Naive thymus-derived CD4-positive, alpha-beta T cell (primary cell): ENCODE measurements at regions of chr16 and their contacts with region 1.

Region 1: GRCh38 chr16:28211712-28212534 is at the start of gene XPO6:
- DNase-seq: peak; percentile 95 to 100 (median 98)
- ATAC-seq: peak; percentile 97
- H3K4me3 ChIP-seq: peak within 1 kb of the TSS; percentile 72
- H3K4me3 Mint-ChIP-seq: peak within 1 kb of the TSS; percentile 65 to 98 (median 93)
- H3K27ac ChIP-seq: peak within 1 kb of the TSS; percentile 85
- H3K27ac Mint-ChIP-seq: peak within 1 kb of the TSS; percentile 80 to 98 (median 94)
- H3K4me1 ChIP-seq: peaks cover 19 to 21% of the 10 kb centered on the region in 2 donors
- H3K4me1 Mint-ChIP-seq: peaks cover 8 to 39% (median 32%) of the 10 kb centered on the region in 7 donors
- H3K27me3 ChIP-seq: no peaks in the 10 kb centered on the region
- H3K27me3 Mint-ChIP-seq: no peaks in the 10 kb centered on the region
- total RNA-seq, gene XPO6: 232 to 437 (median 385) TPM

Region 2: GRCh38 chr16:27203429-27204231 is 1008.3 kb before region 1 on chr16 and contains the start of gene KDM8:
- CTCF ChIA-PET with region 1: no interaction called
- POLR2A ChIA-PET with region 1: no interaction called
- intact Hi-C with region 1: loop called in 1 of 2 experiments (anchors 10 kb)
- DNase-seq: peak; percentile 96 to 100 (median 100)
- ATAC-seq: peak; percentile 88
- H3K4me3 ChIP-seq: peak within 1 kb of the TSS; percentile 97
- H3K4me3 Mint-ChIP-seq: peak within 1 kb of the TSS; percentile 91 to 100 (median 98)
- H3K27ac ChIP-seq: peak within 1 kb of the TSS; percentile 93
- H3K27ac Mint-ChIP-seq: peak within 1 kb of the TSS; percentile 94 to 100 (median 100)
- H3K4me1 ChIP-seq: peaks cover 40 to 50% of the 10 kb centered on the region in 2 donors
- H3K4me1 Mint-ChIP-seq: peaks cover 41 to 70% (median 60%) of the 10 kb centered on the region in 7 donors
- H3K27me3 ChIP-seq: no peaks in the 10 kb centered on the region
- H3K27me3 Mint-ChIP-seq: peaks cover 0 to 3% (median 0%) of the 10 kb centered on the region in 5 donors
- total RNA-seq, gene KDM8: 15.6 to 34.4 (median 19.0) TPM

Region 3: GRCh38 chr16:28140788-28141618 is 70.9 kb before region 1 on chr16:
- CTCF ChIA-PET with region 1: interaction called, 168 read pairs
- POLR2A ChIA-PET with region 1: interaction called, 92 read pairs
- intact Hi-C with region 1: loop called (anchors 1 kb)
- DNase-seq: peak; percentile 15 to 96 (median 90)
- ATAC-seq: peak; percentile 84
- H3K4me3 ChIP-seq: peak overlapping the region; percentile 58
- H3K4me3 Mint-ChIP-seq: peak overlapping the region; percentile 75 to 93 (median 86)
- H3K27ac ChIP-seq: peak overlapping the region; percentile 77
- H3K27ac Mint-ChIP-seq: peak overlapping the region; percentile 95 to 99 (median 99)
- H3K4me1 ChIP-seq: peaks cover 87 to 91% of the 10 kb centered on the region in 2 donors
- H3K4me1 Mint-ChIP-seq: peaks cover 67 to 94% (median 87%) of the 10 kb centered on the region in 7 donors
- H3K27me3 ChIP-seq: no peaks in the 10 kb centered on the region
- H3K27me3 Mint-ChIP-seq: no peaks in the 10 kb centered on the region

Region 4: DNA sequence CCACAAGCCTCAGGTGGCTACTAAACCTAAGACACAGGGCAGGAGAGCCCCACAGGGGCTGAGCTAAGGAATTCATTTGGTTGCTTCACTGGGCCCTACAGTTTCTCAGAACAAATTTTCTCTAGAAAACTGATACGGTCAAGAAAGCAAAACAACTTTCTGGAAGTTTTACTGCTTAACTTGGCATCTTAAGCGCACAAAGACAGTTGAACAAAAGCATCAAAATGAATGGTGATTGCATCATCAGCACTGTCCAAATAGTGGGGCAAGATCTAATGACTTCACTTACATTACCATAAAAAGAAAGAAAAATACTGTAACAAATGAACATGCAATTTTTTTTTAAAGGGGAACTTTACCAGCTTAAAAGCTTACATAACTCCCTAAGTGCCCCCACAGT is 47.8 kb before region 1 on chr16:
- CTCF ChIA-PET with region 1: interaction called, 7 read pairs
- POLR2A ChIA-PET with region 1: interaction called, 9 read pairs
- intact Hi-C with region 1: loop called in 1 of 2 experiments (anchors 1 kb)
- DNase-seq: no peak
- ATAC-seq: no peak
- H3K4me3 ChIP-seq: no peak overlapping the region
- H3K4me3 Mint-ChIP-seq: peak overlapping the region in 4 of 10 donors; percentile 9 to 69 (median 42)
- H3K27ac ChIP-seq: no peak overlapping the region
- H3K27ac Mint-ChIP-seq: peak overlapping the region in 8 of 9 donors; percentile 43 to 95 (median 82)
- H3K4me1 ChIP-seq: peaks cover 13 to 66% of the 10 kb centered on the region in 2 donors
- H3K4me1 Mint-ChIP-seq: peaks cover 62 to 96% (median 86%) of the 10 kb centered on the region in 7 donors
- H3K27me3 ChIP-seq: no peaks in the 10 kb centered on the region
- H3K27me3 Mint-ChIP-seq: no peaks in the 10 kb centered on the region

Region 5: DNA sequence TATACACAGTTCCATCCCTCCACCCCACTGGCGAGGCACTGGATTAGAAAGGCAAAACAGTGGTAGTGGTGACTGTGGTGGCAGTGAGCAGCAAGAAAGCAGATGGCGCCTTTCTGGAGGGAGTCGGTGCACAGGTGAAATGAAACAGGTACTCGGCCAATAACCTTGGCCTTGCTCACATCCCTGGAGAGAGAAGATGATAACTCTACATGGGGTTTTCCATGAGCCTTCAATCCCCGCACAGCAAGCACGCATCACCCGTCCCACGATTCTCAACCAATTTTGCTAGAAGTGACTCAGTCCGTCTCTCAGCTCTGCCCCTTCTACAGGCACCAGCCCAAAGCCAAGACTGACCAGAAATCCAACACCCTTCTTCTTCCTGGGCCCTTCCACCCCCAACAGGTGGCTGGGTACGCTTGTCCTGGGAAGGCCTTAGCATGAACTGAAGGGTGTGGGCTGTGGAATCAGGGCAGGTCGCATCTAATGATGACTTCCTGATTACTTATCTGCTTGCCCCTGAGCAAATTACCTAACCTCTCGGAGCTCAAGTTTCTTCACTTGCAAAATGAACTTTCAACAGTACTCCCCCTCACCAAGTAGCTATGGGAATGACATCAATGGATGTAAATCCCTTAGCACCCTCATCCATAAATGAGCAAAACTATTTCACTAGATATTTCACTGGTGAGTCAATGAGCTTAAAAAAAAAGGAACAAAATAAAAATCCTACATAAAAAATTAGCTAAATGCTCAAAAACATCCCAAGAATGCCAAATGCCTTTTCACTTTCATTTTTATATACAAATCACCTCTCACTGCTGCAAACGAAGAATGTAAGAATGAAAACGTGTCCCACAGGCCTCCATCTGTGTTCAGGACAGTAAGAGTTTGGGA is 18.1 kb before region 1 on chr16:
- CTCF ChIA-PET with region 1: interaction called, 18 read pairs
- POLR2A ChIA-PET with region 1: interaction called, 53 read pairs
- intact Hi-C with region 1: loop called (anchors 1 kb)
- DNase-seq: peak in 2 of 9 donors; percentile 45 to 55
- ATAC-seq: peak; percentile 24
- H3K4me3 ChIP-seq: peak overlapping the region; percentile 39
- H3K4me3 Mint-ChIP-seq: peak overlapping the region; percentile 73 to 87 (median 86)
- H3K27ac ChIP-seq: peak overlapping the region; percentile 77
- H3K27ac Mint-ChIP-seq: peak overlapping the region; percentile 86 to 99 (median 95)
- H3K4me1 ChIP-seq: peaks cover 43 to 75% of the 10 kb centered on the region in 2 donors
- H3K4me1 Mint-ChIP-seq: peaks cover 65 to 94% (median 84%) of the 10 kb centered on the region in 7 donors
- H3K27me3 ChIP-seq: no peaks in the 10 kb centered on the region
- H3K27me3 Mint-ChIP-seq: no peaks in the 10 kb centered on the region

Region 6: DNA sequence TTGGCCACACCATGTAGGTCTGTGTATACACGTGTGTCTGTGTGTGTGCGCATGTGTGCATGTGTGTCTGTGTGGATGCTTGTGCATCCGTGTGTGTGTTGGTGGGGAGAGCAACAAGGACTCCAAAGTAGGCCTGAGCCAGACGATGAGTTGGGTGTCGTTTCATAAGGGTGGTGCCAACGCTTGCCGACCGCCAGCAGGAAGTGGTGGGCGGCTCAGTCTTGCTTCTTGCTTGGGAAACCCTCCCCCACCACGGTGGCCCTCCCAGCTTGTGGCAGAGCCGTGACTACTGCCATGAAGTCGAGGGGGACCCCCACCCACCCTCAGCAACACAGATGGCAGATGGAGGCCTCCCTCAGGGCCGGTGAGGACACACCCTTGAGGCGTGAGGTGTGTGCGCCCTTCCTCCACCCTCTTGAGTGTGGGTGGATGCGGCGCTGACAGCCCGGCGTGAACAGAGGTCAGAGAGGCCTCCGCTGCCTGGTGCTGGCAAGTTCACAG is 97.9 kb after region 1 on chr16:
- CTCF ChIA-PET with region 1: no interaction called
- POLR2A ChIA-PET with region 1: interaction called, 3 read pairs
- intact Hi-C with region 1: loop called in 1 of 2 experiments (anchors 5 kb)
- DNase-seq: peak; percentile 62 to 91 (median 88)
- ATAC-seq: peak; percentile 94
- H3K4me3 ChIP-seq: peak overlapping the region; percentile 59
- H3K4me3 Mint-ChIP-seq: peak overlapping the region; percentile 66 to 87 (median 76)
- H3K27ac ChIP-seq: peak overlapping the region; percentile 77
- H3K27ac Mint-ChIP-seq: peak overlapping the region; percentile 81 to 99 (median 97)
- H3K4me1 ChIP-seq: peaks cover 44 to 49% of the 10 kb centered on the region in 2 donors
- H3K4me1 Mint-ChIP-seq: peaks cover 29 to 91% (median 73%) of the 10 kb centered on the region in 7 donors
- H3K27me3 ChIP-seq: no peaks in the 10 kb centered on the region
- H3K27me3 Mint-ChIP-seq: no peaks in the 10 kb centered on the region

Region 7: DNA sequence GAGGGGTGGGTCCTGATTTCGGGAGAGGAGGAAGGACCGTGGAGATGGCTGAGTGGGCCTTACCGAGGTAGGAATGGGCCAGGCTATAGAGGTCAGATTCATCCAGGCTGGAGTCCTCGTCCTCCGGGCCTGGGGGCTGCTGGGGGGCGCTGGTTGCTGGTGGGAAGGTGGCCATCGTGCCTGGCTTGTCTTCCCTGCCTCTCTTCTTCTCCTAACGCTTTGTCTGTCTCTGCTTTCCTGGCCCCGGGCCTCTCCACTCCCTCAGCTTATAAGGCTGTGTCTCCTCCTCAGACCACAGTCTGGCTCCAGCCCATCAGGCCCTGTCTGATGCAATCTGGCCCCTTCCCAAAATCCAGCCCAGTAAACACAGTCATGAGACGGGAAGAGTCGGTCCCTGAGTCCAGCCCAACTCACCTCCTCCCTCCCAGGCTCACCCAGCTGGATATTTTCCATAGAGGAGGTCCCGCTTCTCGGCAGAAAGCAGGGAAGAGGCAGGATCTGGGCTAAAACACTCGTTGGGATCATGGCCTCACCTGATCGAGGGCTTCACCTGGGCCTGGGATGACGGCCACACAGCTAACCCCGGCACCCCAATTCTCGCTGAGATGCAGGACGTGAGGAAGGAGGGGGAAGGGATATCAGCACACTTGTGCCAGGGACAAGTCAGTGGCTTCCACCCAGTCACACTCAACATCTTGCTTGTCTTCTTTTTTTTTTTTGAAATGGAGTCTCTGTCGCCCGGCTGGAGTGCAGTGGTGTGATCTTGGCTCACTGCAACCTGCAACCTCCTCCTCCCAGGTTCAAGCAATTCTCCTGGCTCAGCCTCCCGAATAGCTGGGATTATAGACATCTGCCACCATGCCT is 327.0 kb after region 1 on chr16 and contains the start of gene NUPR1:
- CTCF ChIA-PET with region 1: no interaction called
- POLR2A ChIA-PET with region 1: no interaction called
- intact Hi-C with region 1: no loop called
- DNase-seq: no peak
- ATAC-seq: no peak
- H3K4me3 ChIP-seq: no peak within 1 kb of the TSS
- H3K4me3 Mint-ChIP-seq: peak within 1 kb of the TSS in 1 of 10 donors; percentile 2
- H3K27ac ChIP-seq: no peak within 1 kb of the TSS
- H3K27ac Mint-ChIP-seq: peak within 1 kb of the TSS; percentile 5 to 87 (median 76)
- H3K4me1 ChIP-seq: peaks cover 17 to 18% of the 10 kb centered on the region in 2 donors
- H3K4me1 Mint-ChIP-seq: peaks cover 18 to 65% (median 40%) of the 10 kb centered on the region in 7 donors
- H3K27me3 ChIP-seq: no peaks in the 10 kb centered on the region
- H3K27me3 Mint-ChIP-seq: no peaks in the 10 kb centered on the region
- total RNA-seq, gene NUPR1: 0.05 to 0.11 TPM in 2 of 5 experiments, not detected in the others

Region 8: DNA sequence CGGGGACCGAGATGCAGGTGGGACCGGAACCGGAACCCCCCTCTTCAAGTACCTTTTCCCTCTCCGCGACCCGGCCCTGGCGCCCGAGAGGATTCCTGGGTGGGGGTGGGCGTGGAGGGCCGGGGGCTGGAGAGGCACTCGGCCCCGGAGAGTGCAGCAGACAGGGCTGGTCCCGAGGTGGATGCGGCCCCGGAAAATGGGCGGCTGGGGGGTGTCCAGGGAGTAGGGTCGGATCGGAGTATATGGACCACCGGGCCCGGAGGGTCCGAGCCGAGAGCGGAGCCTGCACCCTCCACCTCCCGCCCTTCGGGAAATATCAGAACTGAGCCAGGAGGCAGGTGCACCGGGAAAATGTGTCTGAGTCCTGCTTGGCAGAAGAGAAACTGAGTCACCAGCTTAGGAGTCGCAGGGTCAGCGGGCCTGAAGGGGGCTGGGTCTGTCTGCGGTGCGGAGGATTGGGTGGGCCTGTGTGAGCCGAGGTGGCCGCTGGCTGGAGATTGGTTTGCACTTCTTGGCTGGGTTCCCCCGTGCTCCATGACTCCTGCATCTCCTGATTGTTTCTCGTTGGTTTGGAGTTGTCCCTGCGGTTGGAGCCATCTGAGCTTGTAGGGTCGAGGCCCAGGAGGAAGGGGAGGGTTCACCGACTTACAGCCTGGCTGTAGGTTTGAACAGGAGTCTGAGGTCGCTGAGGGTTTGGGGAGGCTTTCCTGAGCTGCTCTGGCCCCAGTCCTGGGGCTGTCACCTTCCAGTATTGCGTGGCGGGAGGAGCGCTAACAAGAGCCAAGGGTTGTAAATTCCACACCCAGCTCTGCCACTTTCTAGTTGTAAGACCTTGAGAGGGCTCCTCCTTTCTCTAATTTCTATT is 652.2 kb after region 1 on chr16:
- CTCF ChIA-PET with region 1: no interaction called
- POLR2A ChIA-PET with region 1: no interaction called
- intact Hi-C with region 1: loop called in 1 of 2 experiments (anchors 5 kb)
- DNase-seq: peak in 4 of 9 donors; percentile 24 to 43 (median 30)
- ATAC-seq: no peak
- H3K4me3 ChIP-seq: peak overlapping the region; percentile 96
- H3K4me3 Mint-ChIP-seq: peak overlapping the region; percentile 97 to 100 (median 99)
- H3K27ac ChIP-seq: peak overlapping the region; percentile 85
- H3K27ac Mint-ChIP-seq: peak overlapping the region; percentile 95 to 99 (median 97)
- H3K4me1 ChIP-seq: peaks cover 7 to 11% of the 10 kb centered on the region in 2 donors
- H3K4me1 Mint-ChIP-seq: peaks cover 15 to 42% (median 29%) of the 10 kb centered on the region in 7 donors
- H3K27me3 ChIP-seq: no peaks in the 10 kb centered on the region
- H3K27me3 Mint-ChIP-seq: no peaks in the 10 kb centered on the region